PC-3 (cell line): ENCODE measurements at regions of chr6 and their contacts with region 1.

Region 1: GRCh38 chr6:141988954-141989705 is 143.6 kb upstream of the GJE1 start:
- DNase-seq: peak; percentile 77
- ATAC-seq: peak; percentile 54
- H3K4me3 ChIP-seq: no peak overlapping the region
- H3K27ac ChIP-seq: no peak overlapping the region
- H3K4me1 ChIP-seq: peaks cover 8% of the 10 kb centered on the region
- H3K27me3 ChIP-seq: no peaks in the 10 kb centered on the region
- CTCF ChIP-seq: peak; percentile 86

Region 2: DNA sequence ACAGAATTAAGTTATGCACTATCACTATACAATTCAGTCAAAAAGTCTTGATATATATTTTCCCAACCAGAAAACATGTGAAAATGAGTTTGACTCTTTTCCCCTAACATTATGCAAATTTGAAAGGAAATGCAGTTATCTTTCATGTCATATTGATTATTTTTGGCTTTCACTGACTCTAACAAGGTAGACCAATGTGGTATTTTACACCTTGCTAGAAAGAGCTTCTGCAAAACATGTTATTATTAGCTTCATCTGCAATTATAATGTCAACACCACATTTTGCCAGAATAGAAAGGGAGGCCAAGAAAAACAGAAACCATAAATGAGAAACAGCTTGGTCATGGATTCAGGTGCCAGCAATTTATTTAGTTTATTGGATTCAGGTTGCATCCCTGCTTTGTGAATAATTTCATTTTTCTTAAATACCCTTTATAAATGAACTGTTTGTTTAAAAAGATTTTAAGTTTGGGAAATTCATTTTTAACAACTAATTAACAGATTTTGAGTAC is 82.5 kb before region 1 on chr6:
- CTCF ChIA-PET with region 1: no interaction called
- POLR2A ChIA-PET with region 1: no interaction called
- intact Hi-C with region 1: no loop called
- DNase-seq: no peak
- ATAC-seq: no peak
- H3K4me3 ChIP-seq: no peak overlapping the region
- H3K27ac ChIP-seq: no peak overlapping the region
- H3K4me1 ChIP-seq: no peaks in the 10 kb centered on the region
- H3K27me3 ChIP-seq: no peaks in the 10 kb centered on the region
- CTCF ChIP-seq: no peak

Region 3: DNA sequence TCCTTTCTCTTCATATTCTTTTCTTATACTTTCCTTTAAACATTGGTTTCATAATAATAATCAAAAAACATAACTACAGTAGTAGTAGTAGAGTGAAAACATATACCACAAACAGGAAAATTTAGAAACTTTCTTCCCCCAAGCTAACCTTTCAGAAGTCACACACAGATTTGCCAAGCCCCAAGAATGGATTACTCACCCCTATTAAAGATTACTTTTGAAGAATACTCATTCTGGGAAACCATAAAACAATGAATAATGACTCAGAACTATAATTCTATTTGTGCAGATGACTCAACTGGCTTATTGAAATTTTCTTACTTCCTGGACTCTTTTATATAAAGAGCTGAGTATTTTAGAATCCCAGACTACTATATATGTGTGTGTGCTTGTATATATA is 24.2 kb after region 1 on chr6:
- CTCF ChIA-PET with region 1: interaction called, 3 read pairs
- POLR2A ChIA-PET with region 1: no interaction called
- intact Hi-C with region 1: loop called (anchors 2 kb)
- DNase-seq: peak; percentile 91
- ATAC-seq: peak; percentile 63
- H3K4me3 ChIP-seq: no peak overlapping the region
- H3K27ac ChIP-seq: peak overlapping the region; percentile 100
- H3K4me1 ChIP-seq: peaks cover 61% of the 10 kb centered on the region
- H3K27me3 ChIP-seq: no peaks in the 10 kb centered on the region
- CTCF ChIP-seq: no peak

Region 4: GRCh38 chr6:142112451-142113061 is 123.4 kb after region 1 on chr6:
- CTCF ChIA-PET with region 1: no interaction called
- POLR2A ChIA-PET with region 1: no interaction called
- intact Hi-C with region 1: loop called (anchors 1 kb)
- DNase-seq: peak; percentile 84
- ATAC-seq: no peak
- H3K4me3 ChIP-seq: no peak overlapping the region
- H3K27ac ChIP-seq: no peak overlapping the region
- H3K4me1 ChIP-seq: no peaks in the 10 kb centered on the region
- H3K27me3 ChIP-seq: no peaks in the 10 kb centered on the region
- CTCF ChIP-seq: peak; percentile 78

Region 5: DNA sequence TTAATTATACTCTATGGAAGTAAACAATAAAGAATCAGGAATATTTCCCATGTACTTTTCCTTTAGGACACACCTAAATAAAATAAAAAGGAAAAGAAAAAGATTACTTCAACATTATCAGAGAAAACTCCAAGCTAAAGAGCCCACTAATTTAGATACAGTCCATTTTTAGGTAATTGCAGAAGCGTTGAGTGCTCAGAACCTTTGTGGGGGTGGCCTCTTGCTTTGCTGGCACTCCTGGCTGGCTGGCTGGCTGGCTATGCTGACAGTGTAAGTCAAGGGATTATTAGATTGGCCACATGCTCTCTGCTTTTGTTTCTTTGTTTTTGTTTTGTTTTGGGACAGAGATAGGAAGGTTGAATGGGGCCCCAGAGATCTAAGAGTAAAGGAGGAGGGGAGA is 143.5 kb after region 1 on chr6 and contains the start of gene GJE1:
- CTCF ChIA-PET with region 1: no interaction called
- POLR2A ChIA-PET with region 1: no interaction called
- intact Hi-C with region 1: no loop called
- DNase-seq: no peak
- ATAC-seq: no peak
- H3K4me3 ChIP-seq: no peak within 1 kb of the TSS
- H3K27ac ChIP-seq: no peak within 1 kb of the TSS
- H3K4me1 ChIP-seq: no peaks in the 10 kb centered on the region
- H3K27me3 ChIP-seq: no peaks in the 10 kb centered on the region
- CTCF ChIP-seq: no peak
- total RNA-seq, gene GJE1: not detected in 2 replicates